Activated T-helper 2 cell treated with anti-CD3 and anti-CD28 coated beads, Interferon-gamma antibody, Interleukin-2, Interleukin-4, amounts not matched to agents 10 μg/mL and 5 μg/mL and 100 μg/mL, durations not matched to agents 14 hours and 24 hours and 36 hours (primary cell): ENCODE measurements at regions of chr4 and their contacts with region 1.

Region 1: GRCh38 chr4:183073838-183074145 is 25.3 kb upstream of the WWC2 start:
- DNase-seq: no peak
- H3K4me3 Mint-ChIP-seq: no peak overlapping the region
- H3K27ac Mint-ChIP-seq: no peak overlapping the region
- H3K4me1 Mint-ChIP-seq: no peaks in the 10 kb centered on the region
- H3K27me3 Mint-ChIP-seq: peaks cover 18% of the 10 kb centered on the region

Region 2: GRCh38 chr4:182938205-182938645 is 135.6 kb before region 1 on chr4:
- intact Hi-C with region 1: loop called (anchors 1 kb)
- DNase-seq: peak; percentile 44
- H3K4me3 Mint-ChIP-seq: no peak overlapping the region
- H3K27ac Mint-ChIP-seq: no peak overlapping the region
- H3K4me1 Mint-ChIP-seq: no peaks in the 10 kb centered on the region
- H3K27me3 Mint-ChIP-seq: peaks cover 11% of the 10 kb centered on the region